ENCODE measurements at regions of chr22 and their contacts with region 1.

Region 1: DNA sequence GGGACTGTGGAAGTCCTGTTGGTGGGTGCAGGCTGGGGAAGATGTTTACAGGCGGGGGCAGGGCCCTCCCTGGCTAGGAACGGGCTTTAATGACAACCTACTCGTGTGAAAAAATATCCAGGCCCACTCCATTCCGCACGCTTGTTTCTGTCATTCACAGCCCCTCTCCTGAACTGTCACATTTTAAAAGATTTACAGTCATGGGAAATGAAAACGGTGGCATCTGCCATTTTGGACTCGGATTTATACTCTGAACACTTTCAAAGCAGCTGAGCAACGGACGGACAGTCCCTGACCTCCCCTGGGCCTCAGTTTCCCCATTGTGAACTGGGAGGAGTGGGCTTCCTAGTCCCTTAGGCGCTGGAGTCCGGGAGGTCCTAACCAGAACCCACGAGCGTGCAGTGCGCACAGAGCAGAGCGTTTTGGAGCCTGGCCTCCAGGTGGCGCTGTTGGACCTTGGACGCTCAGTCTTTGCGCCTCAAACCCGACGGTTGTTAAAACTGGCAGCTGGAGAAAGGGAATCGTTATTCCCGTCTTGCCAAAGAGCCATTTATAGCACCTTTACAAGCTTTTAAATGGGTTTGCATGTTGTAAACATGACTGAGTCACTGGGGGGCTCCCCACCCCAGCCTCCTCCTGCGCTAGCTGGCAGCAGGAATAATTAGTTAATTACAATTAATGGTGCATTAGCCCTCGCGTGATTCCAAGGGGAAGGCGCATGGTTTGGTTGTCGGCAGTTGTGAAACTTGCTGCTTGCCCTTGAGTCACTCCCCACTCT is 75.3 kb downstream of the FBLN1 start:
- DNase-seq: peak; percentile 76 to 85
- H3K4me3 ChIP-seq: no peak overlapping the region
- H3K4me3 Mint-ChIP-seq: no peak overlapping the region
- H3K27ac Mint-ChIP-seq: no peak overlapping the region
- H3K4me1 ChIP-seq: peaks cover 17% of the 10 kb centered on the region
- H3K4me1 Mint-ChIP-seq: no peaks in the 10 kb centered on the region
- H3K27me3 ChIP-seq: no peaks in the 10 kb centered on the region
- H3K27me3 Mint-ChIP-seq: no peaks in the 10 kb centered on the region
- CTCF ChIP-seq: peak; percentile 94

Region 2: DNA sequence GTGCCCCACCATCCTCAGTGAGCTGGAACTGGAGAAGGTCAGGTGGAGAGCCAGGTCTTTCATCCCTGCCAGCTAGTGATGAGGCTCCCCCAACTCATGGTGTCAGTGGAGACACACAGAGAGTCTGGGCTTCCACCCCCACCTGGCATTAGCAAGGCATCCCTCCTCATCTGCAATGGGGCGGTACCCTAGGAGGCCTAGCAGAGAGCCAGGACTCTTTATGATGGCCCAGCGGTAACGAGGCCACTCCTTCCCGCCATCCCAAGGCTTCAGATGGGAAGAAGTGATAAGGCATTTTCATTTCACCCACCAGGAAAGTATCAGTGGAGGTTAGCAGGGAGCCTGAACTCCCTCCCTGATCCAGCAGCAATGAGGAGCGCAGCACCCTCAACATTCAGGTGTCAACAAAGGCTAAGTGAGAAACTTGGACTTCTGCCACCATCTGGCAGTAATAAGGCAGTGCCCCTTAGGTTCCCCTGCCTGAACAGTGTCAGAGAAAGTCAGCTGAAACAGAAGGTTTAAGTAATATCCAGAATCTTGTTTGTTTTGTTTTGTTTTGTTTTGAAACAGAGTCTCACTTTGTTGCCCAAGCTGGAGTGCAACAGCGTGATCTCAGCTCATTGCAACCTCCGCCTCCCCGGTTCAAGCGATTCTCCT is 115.8 kb before region 1 on chr22:
- CTCF ChIA-PET with region 1: no interaction called
- POLR2A ChIA-PET with region 1: no interaction called
- intact Hi-C with region 1: no loop called
- DNase-seq: peak in 1 of 2 experiments; percentile 55
- H3K4me3 ChIP-seq: no peak overlapping the region
- H3K4me3 Mint-ChIP-seq: no peak overlapping the region
- H3K27ac Mint-ChIP-seq: no peak overlapping the region
- H3K4me1 ChIP-seq: no peaks in the 10 kb centered on the region
- H3K4me1 Mint-ChIP-seq: peaks cover 3% of the 10 kb centered on the region
- H3K27me3 ChIP-seq: no peaks in the 10 kb centered on the region
- H3K27me3 Mint-ChIP-seq: no peaks in the 10 kb centered on the region
- CTCF ChIP-seq: peak in 1 of 2 experiments; percentile 36

Region 3: GRCh38 chr22:45553351-45554039 is 24.4 kb before region 1 on chr22:
- CTCF ChIA-PET with region 1: no interaction called
- POLR2A ChIA-PET with region 1: interaction called, 10 read pairs
- intact Hi-C with region 1: no loop called
- DNase-seq: peak; percentile 47 to 74
- H3K4me3 ChIP-seq: no peak overlapping the region
- H3K4me3 Mint-ChIP-seq: peak overlapping the region; percentile 11
- H3K27ac Mint-ChIP-seq: no peak overlapping the region
- H3K4me1 ChIP-seq: peaks cover 4% of the 10 kb centered on the region; the same call in 1 of the 2 replicates
- H3K4me1 Mint-ChIP-seq: no peaks in the 10 kb centered on the region
- H3K27me3 ChIP-seq: no peaks in the 10 kb centered on the region
- H3K27me3 Mint-ChIP-seq: no peaks in the 10 kb centered on the region
- CTCF ChIP-seq: peak; percentile 64

Region 4: DNA sequence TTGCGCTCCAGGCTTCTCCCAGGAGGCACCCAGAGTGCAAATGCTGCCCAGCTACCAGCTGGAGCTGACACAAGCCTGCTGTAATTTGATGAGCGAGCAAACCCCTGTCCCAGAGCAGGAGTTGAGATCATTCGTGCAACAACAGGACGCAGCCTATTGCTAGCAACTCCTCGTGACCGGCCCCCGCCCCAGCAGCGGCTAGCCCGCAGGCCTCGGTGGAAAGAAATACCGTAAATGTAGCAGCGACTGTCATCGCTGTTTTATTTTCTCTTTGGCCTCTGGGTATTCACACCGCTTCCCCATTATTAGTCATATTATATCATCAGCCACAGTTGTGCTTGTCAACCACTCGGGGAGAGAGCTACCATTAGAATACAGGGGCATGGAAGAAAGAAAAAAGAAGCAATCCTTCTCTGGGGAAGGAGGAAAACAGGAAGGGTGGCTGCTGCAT is 34.5 kb after region 1 on chr22:
- CTCF ChIA-PET with region 1: no interaction called
- POLR2A ChIA-PET with region 1: no interaction called
- intact Hi-C with region 1: no loop called
- DNase-seq: no peak
- H3K4me3 ChIP-seq: no peak overlapping the region
- H3K4me3 Mint-ChIP-seq: no peak overlapping the region
- H3K27ac Mint-ChIP-seq: no peak overlapping the region
- H3K4me1 ChIP-seq: no peaks in the 10 kb centered on the region
- H3K4me1 Mint-ChIP-seq: no peaks in the 10 kb centered on the region
- H3K27me3 ChIP-seq: no peaks in the 10 kb centered on the region
- H3K27me3 Mint-ChIP-seq: no peaks in the 10 kb centered on the region
- CTCF ChIP-seq: no peak

Region 5: DNA sequence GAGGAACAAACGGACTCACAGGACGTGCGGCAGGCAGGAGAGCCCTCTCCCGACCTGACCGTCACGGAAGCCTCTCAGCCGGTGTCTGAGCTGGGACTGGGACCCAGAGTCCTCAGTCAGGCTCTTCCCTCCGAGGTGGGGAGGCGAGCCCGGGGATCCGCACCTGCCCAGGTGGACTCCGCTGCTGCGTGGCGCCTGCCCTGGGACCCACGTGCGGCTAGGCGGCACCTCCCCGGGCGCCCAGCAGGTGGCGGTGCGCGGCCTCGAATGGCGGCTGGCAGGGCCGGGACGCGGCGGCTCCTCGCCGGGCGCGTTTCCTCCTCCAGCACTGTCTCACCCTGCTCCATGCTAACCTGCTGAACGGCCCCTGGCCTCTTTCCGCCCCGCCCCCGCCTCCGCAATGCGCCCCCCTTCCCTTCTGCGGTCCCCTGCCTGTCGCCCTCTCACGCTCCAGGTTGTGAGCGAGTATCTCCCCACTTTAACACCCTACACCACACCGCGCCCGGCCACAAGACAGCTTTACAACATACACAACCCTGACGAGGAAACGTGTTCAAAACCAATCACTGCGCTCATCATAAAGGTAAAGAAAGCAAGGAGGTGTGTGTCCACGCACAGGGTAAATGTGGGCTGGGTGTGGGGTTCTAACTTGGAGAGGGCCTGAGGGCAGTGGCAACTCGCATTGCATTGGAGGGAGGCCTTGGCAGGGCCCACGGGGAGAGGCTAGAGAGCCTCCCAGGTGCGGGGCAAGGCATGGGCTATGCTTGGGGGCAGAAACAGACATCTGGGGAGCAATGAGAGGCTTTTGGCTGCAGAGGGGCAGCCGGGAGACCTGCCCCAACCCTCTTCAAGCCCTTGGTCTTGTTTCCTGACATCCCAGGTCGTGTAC is 67.8 kb after region 1 on chr22:
- CTCF ChIA-PET with region 1: interaction called, 4 read pairs
- POLR2A ChIA-PET with region 1: no interaction called
- intact Hi-C with region 1: loop called (anchors 5 kb)
- DNase-seq: peak; percentile 64 to 87
- H3K4me3 ChIP-seq: no peak overlapping the region
- H3K4me3 Mint-ChIP-seq: peak overlapping the region; percentile 21
- H3K27ac Mint-ChIP-seq: no peak overlapping the region
- H3K4me1 ChIP-seq: 0 out of 2 replicates have a peak, but pooled peaks cover 4% of the 10 kb centered on the region
- H3K4me1 Mint-ChIP-seq: no peaks in the 10 kb centered on the region
- H3K27me3 ChIP-seq: no peaks in the 10 kb centered on the region
- H3K27me3 Mint-ChIP-seq: no peaks in the 10 kb centered on the region
- CTCF ChIP-seq: peak; percentile 50 to 94

Measured in Caco-2 (cell line).